ENCODE measurements at regions of chr5 and their contacts with region 1.

Region 1: GRCh38 chr5:912280-913091 is 19.8 kb downstream of the TRIP13 start:
- DNase-seq: peak; percentile 97
- H3K4me3 Mint-ChIP-seq: peak overlapping the region; percentile 61
- H3K27ac Mint-ChIP-seq: peak overlapping the region; percentile 99
- H3K4me1 Mint-ChIP-seq: peaks cover 43% of the 10 kb centered on the region
- H3K27me3 Mint-ChIP-seq: no peaks in the 10 kb centered on the region
- CTCF ChIP-seq: peak; percentile 37

Region 2: GRCh38 chr5:892394-893136 is 19.9 kb before region 1 on chr5 and contains the starts of genes BRD9 and TRIP13:
- CTCF ChIA-PET with region 1: interaction called, 4 read pairs
- POLR2A ChIA-PET with region 1: interaction called, 13 read pairs
- intact Hi-C with region 1: no loop called
- DNase-seq: peak; percentile 73
- H3K4me3 Mint-ChIP-seq: peak within 1 kb of the TSS; percentile 82
- H3K27ac Mint-ChIP-seq: peak within 1 kb of the TSS; percentile 88
- H3K4me1 Mint-ChIP-seq: peaks cover 11% of the 10 kb centered on the region
- H3K27me3 Mint-ChIP-seq: no peaks in the 10 kb centered on the region
- CTCF ChIP-seq: no peak
- total RNA-seq, gene BRD9: 44.9 and 48.9 TPM in 2 replicates
- total RNA-seq, gene TRIP13: 13.7 and 21.4 TPM in 2 replicates

Region 3: GRCh38 chr5:902129-902916 is 10.2 kb before region 1 on chr5:
- CTCF ChIA-PET with region 1: interaction called, 14 read pairs
- POLR2A ChIA-PET with region 1: no interaction called
- intact Hi-C with region 1: no loop called
- DNase-seq: no peak
- H3K4me3 Mint-ChIP-seq: no peak overlapping the region
- H3K27ac Mint-ChIP-seq: peak overlapping the region; percentile 8
- H3K4me1 Mint-ChIP-seq: no peaks in the 10 kb centered on the region
- H3K27me3 Mint-ChIP-seq: no peaks in the 10 kb centered on the region
- CTCF ChIP-seq: no peak

Region 4: GRCh38 chr5:1101961-1102713 is 189.7 kb after region 1 on chr5:
- CTCF ChIA-PET with region 1: no interaction called
- POLR2A ChIA-PET with region 1: no interaction called
- intact Hi-C with region 1: no loop called
- DNase-seq: no peak
- H3K4me3 Mint-ChIP-seq: no peak overlapping the region
- H3K27ac Mint-ChIP-seq: no peak overlapping the region
- H3K4me1 Mint-ChIP-seq: no peaks in the 10 kb centered on the region
- H3K27me3 Mint-ChIP-seq: peaks cover 11% of the 10 kb centered on the region
- CTCF ChIP-seq: no peak